ENCODE measurements at regions of chr1 and their contacts with region 1.

Region 1: GRCh38 chr1:211654838-211655787 is 20.3 kb downstream of the NEK2 start:
- DNase-seq: peak; percentile 69 to 85
- H3K4me3 ChIP-seq: no peak overlapping the region
- H3K27ac ChIP-seq: peak overlapping the region; percentile 94
- H3K4me1 ChIP-seq: peaks cover 33% of the 10 kb centered on the region
- H3K27me3 ChIP-seq: no peaks in the 10 kb centered on the region
- CTCF ChIP-seq: peak; percentile 94

Region 2: DNA sequence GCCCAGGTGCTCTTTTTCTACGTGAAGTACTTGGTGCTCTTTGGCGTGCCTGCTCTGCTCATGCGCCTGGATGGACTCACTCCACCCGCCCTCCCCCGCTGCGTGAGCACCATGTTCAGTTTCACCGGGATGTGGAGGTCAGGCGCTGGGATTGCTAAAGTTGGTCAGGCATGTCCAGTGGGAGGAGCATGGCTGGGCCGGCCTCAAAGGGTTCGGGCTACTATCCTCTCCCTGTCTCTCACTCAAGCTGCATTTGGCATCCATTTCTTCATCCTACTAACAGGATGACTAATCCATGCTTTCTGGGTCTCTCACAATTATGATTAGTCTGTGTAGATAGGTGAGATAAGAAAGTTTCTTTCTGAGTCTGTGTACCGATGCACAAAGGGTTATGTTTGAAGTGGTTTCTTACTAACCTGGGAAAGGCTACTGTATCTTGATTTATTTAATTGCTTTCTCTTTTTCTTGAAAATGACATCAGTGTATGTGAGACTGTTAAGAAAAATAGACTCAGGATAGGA is 1190.5 kb before region 1 on chr1:
- CTCF ChIA-PET with region 1: no interaction called
- POLR2A ChIA-PET with region 1: no interaction called
- intact Hi-C with region 1: loop called (anchors 5 kb)
- DNase-seq: peak; percentile 45 to 67
- H3K4me3 ChIP-seq: no peak overlapping the region
- H3K27ac ChIP-seq: no peak overlapping the region
- H3K4me1 ChIP-seq: no peaks in the 10 kb centered on the region
- H3K27me3 ChIP-seq: no peaks in the 10 kb centered on the region
- CTCF ChIP-seq: no peak

Region 3: GRCh38 chr1:211133836-211134669 is 521.1 kb before region 1 on chr1 and contains the start of gene KCNH1:
- CTCF ChIA-PET with region 1: no interaction called
- POLR2A ChIA-PET with region 1: no interaction called
- intact Hi-C with region 1: loop called (anchors 10 kb)
- DNase-seq: peak in 1 of 2 experiments; percentile 81
- H3K4me3 ChIP-seq: peak within 1 kb of the TSS; percentile 4; the same call in 1 of the 2 replicates
- H3K27ac ChIP-seq: no peak within 1 kb of the TSS
- H3K4me1 ChIP-seq: no peaks in the 10 kb centered on the region
- H3K27me3 ChIP-seq: peaks cover 42% of the 10 kb centered on the region
- CTCF ChIP-seq: peak; percentile 69
- total RNA-seq, gene KCNH1: not detected in 2 replicates

Region 4: GRCh38 chr1:211469938-211470529 is 185.1 kb before region 1 on chr1:
- CTCF ChIA-PET with region 1: interaction called, 4 read pairs
- POLR2A ChIA-PET with region 1: no interaction called
- intact Hi-C with region 1: loop called (anchors 2 kb)
- DNase-seq: peak in 1 of 2 experiments; percentile 83
- H3K4me3 ChIP-seq: no peak overlapping the region
- H3K27ac ChIP-seq: no peak overlapping the region
- H3K4me1 ChIP-seq: no peaks in the 10 kb centered on the region
- H3K27me3 ChIP-seq: no peaks in the 10 kb centered on the region
- CTCF ChIP-seq: peak; percentile 81

Region 5: DNA sequence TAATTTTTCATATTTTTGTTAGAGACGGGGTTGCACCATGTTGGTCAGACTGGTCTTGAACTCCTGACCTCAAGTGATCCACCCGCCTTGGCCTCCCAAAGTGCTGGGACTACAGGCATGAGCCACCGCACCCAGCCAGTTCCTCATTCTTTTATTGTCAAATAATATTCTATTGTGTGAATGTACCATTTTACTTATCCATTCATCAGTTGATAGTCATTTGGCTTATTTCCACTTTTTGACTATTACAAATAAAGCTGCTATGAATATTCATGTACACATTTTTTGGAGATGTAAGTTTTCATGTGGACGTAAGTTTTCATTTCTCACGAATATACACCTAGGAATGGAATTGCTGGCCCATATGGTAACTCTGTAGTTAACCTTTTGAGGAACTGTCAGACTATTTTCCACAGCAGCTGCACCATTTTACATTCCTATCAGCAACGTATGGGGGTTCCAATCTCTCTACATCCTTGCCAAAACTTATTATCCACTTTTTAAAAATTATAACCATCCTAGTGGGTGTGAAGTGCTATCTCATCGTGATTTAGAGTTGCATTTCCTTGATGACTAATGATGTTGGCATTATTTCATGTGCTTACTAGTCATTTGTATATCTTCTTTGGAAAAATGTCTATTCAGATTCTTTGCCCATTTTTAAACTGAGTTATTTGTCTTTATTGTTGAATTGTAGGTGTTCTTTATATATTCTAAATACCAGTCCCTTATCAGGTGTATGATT is 746.9 kb after region 1 on chr1:
- CTCF ChIA-PET with region 1: no interaction called
- POLR2A ChIA-PET with region 1: no interaction called
- intact Hi-C with region 1: no loop called
- DNase-seq: peak; percentile 20 to 60
- H3K4me3 ChIP-seq: no peak overlapping the region
- H3K27ac ChIP-seq: peak overlapping the region; percentile 94
- H3K4me1 ChIP-seq: peaks cover 19% of the 10 kb centered on the region
- H3K27me3 ChIP-seq: no peaks in the 10 kb centered on the region
- CTCF ChIP-seq: no peak